BJ (cell line): ENCODE measurements at regions of chr20 and their contacts with region 1.

Region 1: GRCh38 chr20:56689288-56689687 is 60.2 kb downstream of the TFAP2C start:
- DNase-seq: peak; percentile 40
- H3K4me3 ChIP-seq: no peak overlapping the region
- H3K27me3 ChIP-seq: no peaks in the 10 kb centered on the region; the same call in 1 of the 2 replicates
- CTCF ChIP-seq: 0 out of 2 replicates have a peak, but pooled peaks have one; percentile 23

Region 2: GRCh38 chr20:56629670-56630478 is 59.4 kb before region 1 on chr20:
- CTCF ChIA-PET with region 1: interaction called, 11 read pairs
- POLR2A ChIA-PET with region 1: no interaction called
- DNase-seq: no peak
- H3K4me3 ChIP-seq: peak overlapping the region; percentile 63
- H3K27me3 ChIP-seq: peaks cover 3% of the 10 kb centered on the region; the same call in 1 of the 2 replicates
- CTCF ChIP-seq: peak; percentile 90